ENCODE measurements at regions of chr1 and their contacts with region 1.

Region 1: GRCh38 chr1:72623299-72623708 is 341.0 kb upstream of the NEGR1 start:
- DNase-seq: peak; percentile 86
- H3K4me3 ChIP-seq: no peak overlapping the region
- H3K27ac ChIP-seq: peak overlapping the region; percentile 32
- H3K4me1 ChIP-seq: peaks cover 7% of the 10 kb centered on the region
- H3K27me3 ChIP-seq: no peaks in the 10 kb centered on the region
- CTCF ChIP-seq: peak; percentile 76

Region 2: DNA sequence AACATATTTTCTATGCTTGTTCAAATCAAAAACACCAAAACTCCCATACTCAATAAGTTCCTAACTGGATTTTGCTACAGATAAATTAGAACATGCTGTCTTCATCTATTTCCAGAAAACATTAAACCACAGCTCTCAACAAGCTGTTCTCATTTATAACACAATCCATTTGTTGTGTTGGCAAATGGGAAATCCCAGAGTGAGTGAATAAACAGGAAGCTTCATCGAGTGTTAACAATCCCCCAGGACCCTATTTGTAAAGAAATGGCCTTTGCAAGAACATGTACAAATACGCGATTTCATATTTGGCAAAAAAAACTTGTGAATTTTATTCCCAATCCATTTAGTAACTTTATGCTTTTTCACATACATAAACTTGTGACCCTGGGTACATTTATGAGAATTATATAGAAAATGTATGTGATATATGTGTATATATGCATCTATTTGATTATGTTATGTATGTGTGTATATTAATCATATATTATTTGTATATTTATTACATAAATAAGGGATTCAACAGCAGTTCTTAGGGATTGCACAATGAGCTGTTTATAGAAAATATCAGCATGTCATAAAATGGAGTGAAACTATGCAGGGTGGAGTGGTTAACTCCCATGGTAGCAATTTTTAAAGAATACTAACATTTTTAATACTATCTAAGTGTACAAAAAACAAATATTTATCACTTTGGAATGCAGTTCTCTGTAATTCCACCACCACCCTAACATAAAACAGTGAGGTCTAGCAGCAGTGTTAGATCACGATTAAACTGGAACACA is 501.0 kb before region 1 on chr1:
- CTCF ChIA-PET with region 1: no interaction called
- POLR2A ChIA-PET with region 1: no interaction called
- intact Hi-C with region 1: no loop called
- DNase-seq: peak; percentile 67
- H3K4me3 ChIP-seq: no peak overlapping the region
- H3K27ac ChIP-seq: no peak overlapping the region
- H3K4me1 ChIP-seq: peaks cover 15% of the 10 kb centered on the region
- H3K27me3 ChIP-seq: no peaks in the 10 kb centered on the region
- CTCF ChIP-seq: no peak

Region 3: GRCh38 chr1:72579629-72580028 is 43.7 kb before region 1 on chr1:
- CTCF ChIA-PET with region 1: no interaction called
- POLR2A ChIA-PET with region 1: no interaction called
- intact Hi-C with region 1: no loop called
- DNase-seq: no peak
- H3K4me3 ChIP-seq: no peak overlapping the region
- H3K27ac ChIP-seq: no peak overlapping the region
- H3K4me1 ChIP-seq: no peaks in the 10 kb centered on the region
- H3K27me3 ChIP-seq: no peaks in the 10 kb centered on the region
- CTCF ChIP-seq: no peak

Region 4: DNA sequence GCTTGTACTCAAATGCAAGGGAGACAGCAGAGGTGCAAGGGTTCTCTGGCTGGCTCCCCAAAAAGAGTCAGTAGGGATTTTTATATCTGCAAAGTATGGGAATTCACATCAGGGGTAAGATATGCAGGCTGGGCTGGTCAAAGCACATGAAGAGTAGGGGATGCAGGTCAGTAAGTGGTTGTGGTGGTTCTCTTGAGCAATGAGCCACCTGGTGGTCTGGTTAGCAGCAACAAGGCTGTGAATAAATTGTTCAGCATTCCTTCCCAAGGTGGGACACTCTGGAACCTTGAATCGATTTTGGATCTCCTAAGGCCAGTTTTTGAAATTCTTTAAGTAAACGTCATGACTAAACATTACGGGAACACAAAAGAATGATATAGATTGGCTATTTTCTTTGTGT is 222.0 kb after region 1 on chr1:
- CTCF ChIA-PET with region 1: no interaction called
- POLR2A ChIA-PET with region 1: no interaction called
- intact Hi-C with region 1: loop called (anchors 5 kb)
- DNase-seq: peak; percentile 49
- H3K4me3 ChIP-seq: no peak overlapping the region
- H3K27ac ChIP-seq: no peak overlapping the region
- H3K4me1 ChIP-seq: peaks cover 8% of the 10 kb centered on the region
- H3K27me3 ChIP-seq: no peaks in the 10 kb centered on the region
- CTCF ChIP-seq: peak; percentile 54

Region 5: GRCh38 chr1:73144311-73144710 is 521.0 kb after region 1 on chr1:
- CTCF ChIA-PET with region 1: no interaction called
- POLR2A ChIA-PET with region 1: no interaction called
- intact Hi-C with region 1: no loop called
- DNase-seq: no peak
- H3K4me3 ChIP-seq: no peak overlapping the region
- H3K27ac ChIP-seq: no peak overlapping the region
- H3K4me1 ChIP-seq: no peaks in the 10 kb centered on the region
- H3K27me3 ChIP-seq: no peaks in the 10 kb centered on the region
- CTCF ChIP-seq: no peak

Measured in A673 (cell line).